MCF 10A (cell line): ENCODE measurements at regions of chr19 and their contacts with region 1.

Region 1: GRCh38 chr19:1587873-1588272 is 4.8 kb downstream of the MBD3 start:
- DNase-seq: peak; percentile 20
- H3K4me3 Mint-ChIP-seq: no peak overlapping the region
- H3K27ac Mint-ChIP-seq: peak overlapping the region; percentile 40
- H3K4me1 Mint-ChIP-seq: peaks cover 19% of the 10 kb centered on the region
- H3K27me3 Mint-ChIP-seq: no peaks in the 10 kb centered on the region
- CTCF ChIP-seq: no peak

Region 2: GRCh38 chr19:1507763-1508509 is 79.9 kb before region 1 on chr19:
- CTCF ChIA-PET with region 1: no interaction called
- POLR2A ChIA-PET with region 1: no interaction called
- intact Hi-C with region 1: no loop called
- DNase-seq: peak; percentile 97
- H3K4me3 Mint-ChIP-seq: peak overlapping the region; percentile 91
- H3K27ac Mint-ChIP-seq: peak overlapping the region; percentile 99
- H3K4me1 Mint-ChIP-seq: peaks cover 9% of the 10 kb centered on the region
- H3K27me3 Mint-ChIP-seq: no peaks in the 10 kb centered on the region
- CTCF ChIP-seq: no peak

Region 3: GRCh38 chr19:1576242-1577089 is 11.4 kb before region 1 on chr19:
- CTCF ChIA-PET with region 1: interaction called, 3 read pairs
- POLR2A ChIA-PET with region 1: interaction called, 11 read pairs
- intact Hi-C with region 1: no loop called
- DNase-seq: no peak
- H3K4me3 Mint-ChIP-seq: no peak overlapping the region
- H3K27ac Mint-ChIP-seq: no peak overlapping the region
- H3K4me1 Mint-ChIP-seq: no peaks in the 10 kb centered on the region
- H3K27me3 Mint-ChIP-seq: no peaks in the 10 kb centered on the region
- CTCF ChIP-seq: no peak

Region 4: GRCh38 chr19:1665565-1666047 is 77.7 kb after region 1 on chr19:
- CTCF ChIA-PET with region 1: no interaction called
- POLR2A ChIA-PET with region 1: no interaction called
- intact Hi-C with region 1: no loop called
- DNase-seq: no peak
- H3K4me3 Mint-ChIP-seq: no peak overlapping the region
- H3K27ac Mint-ChIP-seq: no peak overlapping the region
- H3K4me1 Mint-ChIP-seq: peaks cover 11% of the 10 kb centered on the region
- H3K27me3 Mint-ChIP-seq: peaks cover 34% of the 10 kb centered on the region
- CTCF ChIP-seq: no peak